Activated CD4-positive, alpha-beta T cell treated with anti-CD3 and anti-CD28 coated beads, Interleukin-2, amount 10 ng/mL, durations not matched to agents 7 days and 5 days (primary cell): ENCODE measurements at regions of chr16 and their contacts with region 1.

Region 1: GRCh38 chr16:12057266-12057665 is 80.7 kb downstream of the SNX29 start:
- DNase-seq: no peak
- H3K4me3 Mint-ChIP-seq: no peak overlapping the region
- H3K27ac Mint-ChIP-seq: no peak overlapping the region
- H3K4me1 Mint-ChIP-seq: peaks cover 15% of the 10 kb centered on the region
- H3K27me3 Mint-ChIP-seq: no peaks in the 10 kb centered on the region

Region 2: GRCh38 chr16:12067714-12068401 is 10.6 kb after region 1 on chr16:
- CTCF ChIA-PET with region 1: interaction called, 15 read pairs
- POLR2A ChIA-PET with region 1: no interaction called
- DNase-seq: peak; percentile 74
- H3K4me3 Mint-ChIP-seq: no peak overlapping the region
- H3K27ac Mint-ChIP-seq: no peak overlapping the region
- H3K4me1 Mint-ChIP-seq: peaks cover 6% of the 10 kb centered on the region
- H3K27me3 Mint-ChIP-seq: no peaks in the 10 kb centered on the region